PC-3 (cell line): ENCODE measurements at regions of chr5 and their contacts with region 1.

Region 1: GRCh38 chr5:37757980-37758583 is 81.8 kb downstream of the GDNF start:
- DNase-seq: peak; percentile 54
- ATAC-seq: no peak
- H3K4me3 ChIP-seq: no peak overlapping the region
- H3K27ac ChIP-seq: no peak overlapping the region
- H3K4me1 ChIP-seq: peaks cover 16% of the 10 kb centered on the region
- H3K27me3 ChIP-seq: no peaks in the 10 kb centered on the region
- CTCF ChIP-seq: peak; percentile 65

Region 2: GRCh38 chr5:37637165-37637845 is 120.8 kb before region 1 on chr5:
- CTCF ChIA-PET with region 1: no interaction called
- POLR2A ChIA-PET with region 1: no interaction called
- intact Hi-C with region 1: loop called (anchors 10 kb)
- DNase-seq: peak; percentile 88
- ATAC-seq: peak; percentile 80
- H3K4me3 ChIP-seq: no peak overlapping the region
- H3K27ac ChIP-seq: peak overlapping the region; percentile 35
- H3K4me1 ChIP-seq: peaks cover 45% of the 10 kb centered on the region
- H3K27me3 ChIP-seq: no peaks in the 10 kb centered on the region
- CTCF ChIP-seq: no peak

Region 3: GRCh38 chr5:37658440-37658839 is 99.6 kb before region 1 on chr5:
- CTCF ChIA-PET with region 1: no interaction called
- POLR2A ChIA-PET with region 1: no interaction called
- intact Hi-C with region 1: no loop called
- DNase-seq: peak; percentile 35
- ATAC-seq: peak; percentile 57; the same call in 1 of the 2 replicates
- H3K4me3 ChIP-seq: no peak overlapping the region
- H3K27ac ChIP-seq: no peak overlapping the region
- H3K4me1 ChIP-seq: peaks cover 8% of the 10 kb centered on the region
- H3K27me3 ChIP-seq: no peaks in the 10 kb centered on the region
- CTCF ChIP-seq: no peak